ENCODE measurements at regions of chr4 and their contacts with region 1.

Region 1: GRCh38 chr4:127622921-127623656 is 9.7 kb upstream of the INTU start:
- ATAC-seq: peak; percentile 83 to 95 (median 94)
- H3K4me3 ChIP-seq: peak overlapping the region; percentile 39 to 59 (median 51)
- H3K27ac ChIP-seq: no peak overlapping the region
- H3K4me1 ChIP-seq: no peaks in the 10 kb centered on the region

Region 2: DNA sequence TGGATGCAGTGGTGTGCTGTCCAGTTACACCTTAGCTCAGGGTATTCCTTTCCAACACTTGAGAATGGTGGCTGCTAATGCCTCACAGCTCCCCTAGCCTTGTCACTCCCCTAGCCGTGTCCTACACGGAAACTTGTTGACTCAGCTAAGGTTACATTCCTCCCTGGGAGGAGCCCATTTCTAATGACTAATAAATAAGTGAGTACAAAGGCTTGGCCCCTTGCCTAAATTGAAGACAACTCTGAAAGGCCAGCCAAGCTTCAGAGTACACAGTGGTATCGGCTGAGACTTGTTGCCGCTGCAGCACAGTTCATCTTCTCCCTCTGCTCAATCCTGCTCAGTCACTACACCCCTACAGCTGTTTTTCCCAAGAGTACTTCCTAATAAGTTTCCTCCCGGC is 85.9 kb after region 1 on chr4:
- in situ Hi-C with region 1: loop called in 1 of 9 experiments (anchors 25 kb)
- ATAC-seq: peak in 3 of 8 experiments; percentile 77 to 99 (median 98)
- H3K4me3 ChIP-seq: no peak overlapping the region
- H3K27ac ChIP-seq: no peak overlapping the region
- H3K4me1 ChIP-seq: no peaks in the 10 kb centered on the region

Region 3: GRCh38 chr4:127732613-127733328 is 109.7 kb after region 1 on chr4:
- in situ Hi-C with region 1: loop called in 2 of 9 experiments (anchors 25 kb)
- ATAC-seq: peak in 6 of 8 experiments; percentile 24 to 90 (median 74)
- H3K4me3 ChIP-seq: no peak overlapping the region
- H3K27ac ChIP-seq: no peak overlapping the region
- H3K4me1 ChIP-seq: no peaks in the 10 kb centered on the region

Measured in motor neuron (in vitro differentiated cells).